ENCODE measurements at regions of chr12 and their contacts with region 1.

Region 1: DNA sequence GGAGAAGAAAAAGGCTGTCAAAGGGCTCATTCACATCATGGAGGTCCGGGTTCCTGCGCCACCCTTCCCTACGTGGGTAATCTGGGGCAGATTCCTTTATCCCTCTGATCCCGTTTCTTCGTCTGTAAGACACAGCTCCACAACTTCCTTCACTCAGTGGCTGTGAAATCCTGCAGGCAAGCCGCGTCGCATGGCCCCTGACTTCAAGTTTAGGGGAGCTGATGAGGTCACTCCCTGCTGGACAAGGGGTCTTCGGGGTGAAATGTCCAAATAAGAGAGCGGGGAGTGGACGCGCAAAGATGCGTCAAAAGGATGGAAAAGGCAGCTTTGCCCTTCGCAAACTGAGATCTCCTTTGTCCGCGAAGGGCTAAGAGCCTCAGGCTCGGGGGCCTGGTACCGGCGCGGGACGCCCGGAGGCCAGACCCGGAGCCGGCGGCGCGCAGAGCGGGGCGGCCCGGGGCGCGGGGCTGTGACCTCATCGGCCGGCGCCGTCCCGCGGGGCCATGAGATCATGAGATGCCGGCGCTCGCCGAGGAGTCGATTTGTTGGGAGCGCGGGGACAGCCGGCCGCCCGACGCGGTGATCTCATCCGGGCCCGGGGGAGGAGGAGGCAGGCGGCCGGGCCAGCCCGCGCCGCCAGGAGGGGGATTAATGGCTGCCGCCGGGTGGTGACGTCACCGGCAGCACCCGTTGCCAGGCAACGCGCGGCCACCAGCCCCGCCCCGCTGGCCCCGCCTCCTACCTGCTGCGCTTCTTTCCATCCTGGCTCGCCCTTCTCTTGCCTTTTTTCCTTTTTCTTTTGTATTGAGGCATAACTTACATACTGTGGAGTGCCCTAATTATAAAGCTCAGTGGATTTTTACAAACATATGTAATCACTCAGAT is 62.1 kb downstream of the HRK start:
- DNase-seq: peak; percentile 17
- ATAC-seq: peak; percentile 93
- H3K4me3 ChIP-seq: peak overlapping the region; percentile 93
- H3K27ac ChIP-seq: peak overlapping the region; percentile 69
- H3K4me1 ChIP-seq: peaks cover 6% of the 10 kb centered on the region; the same call in 1 of the 2 replicates
- H3K27me3 ChIP-seq: no peaks in the 10 kb centered on the region
- CTCF ChIP-seq: no peak
- EP300 ChIP-seq: no peak
- POLR2A ChIP-seq: peak; percentile 83
- RAD21 ChIP-seq: no peak

Region 2: GRCh38 chr12:116910645-116911451 is 91.7 kb after region 1 on chr12 and contains the start of gene FBXW8:
- CTCF ChIA-PET with region 1: no interaction called
- POLR2A ChIA-PET with region 1: no interaction called
- RAD21 ChIA-PET with region 1: no interaction called
- SMC1A ChIA-PET with region 1: no interaction called
- in situ Hi-C with region 1: no loop called
- intact Hi-C with region 1: loop called (anchors 5 kb)
- DNase-seq: no peak
- ATAC-seq: peak; percentile 98
- H3K4me3 ChIP-seq: peak within 1 kb of the TSS; percentile 71
- H3K27ac ChIP-seq: no peak within 1 kb of the TSS; the same call in 1 of the 2 replicates
- H3K4me1 ChIP-seq: no peaks in the 10 kb centered on the region; the same call in 1 of the 2 replicates
- H3K27me3 ChIP-seq: no peaks in the 10 kb centered on the region
- CTCF ChIP-seq: no peak
- EP300 ChIP-seq: no peak
- POLR2A ChIP-seq: peak; percentile 84
- RAD21 ChIP-seq: no peak
- polyA plus RNA-seq, gene FBXW8: 0.49 to 0.52 TPM

Measured in GM12878 (cell line).